CD8-positive, alpha-beta T cell (primary cell): ENCODE measurements at regions of chr19 and their contacts with region 1.

Region 1: GRCh38 chr19:48445606-48446481 is at the start of gene GRWD1:
- DNase-seq: peak; percentile 83 to 98 (median 91)
- ATAC-seq: peak; percentile 93
- H3K4me3 ChIP-seq: peak within 1 kb of the TSS; percentile 82 to 90
- H3K4me3 Mint-ChIP-seq: peak within 1 kb of the TSS; percentile 93
- H3K27ac ChIP-seq: peak within 1 kb of the TSS; percentile 79 to 89
- H3K27ac Mint-ChIP-seq: peak within 1 kb of the TSS; percentile 95
- H3K4me1 ChIP-seq: peaks cover 24% of the 10 kb centered on the region
- H3K4me1 Mint-ChIP-seq: peaks cover 40% of the 10 kb centered on the region
- H3K27me3 ChIP-seq: peaks cover 19 to 22% of the 10 kb centered on the region in 2 experiments
- H3K27me3 Mint-ChIP-seq: peaks cover 18% of the 10 kb centered on the region
- CTCF ChIP-seq: no peak
- total RNA-seq, gene GRWD1: 36.1 to 41.7 TPM

Region 2: GRCh38 chr19:48170038-48170812 is 275.6 kb before region 1 on chr19 and contains the starts of genes LIG1 and ZSWIM9:
- CTCF ChIA-PET with region 1: no interaction called
- POLR2A ChIA-PET with region 1: no interaction called
- intact Hi-C with region 1: loop called in 1 of 2 experiments (anchors 2 kb)
- DNase-seq: peak; percentile 82 to 95 (median 90)
- ATAC-seq: peak; percentile 81
- H3K4me3 ChIP-seq: peak within 1 kb of the TSS; percentile 96 to 100
- H3K4me3 Mint-ChIP-seq: peak within 1 kb of the TSS; percentile 98
- H3K27ac ChIP-seq: peak within 1 kb of the TSS; percentile 82 to 92
- H3K27ac Mint-ChIP-seq: peak within 1 kb of the TSS; percentile 97
- H3K4me1 ChIP-seq: peaks cover 7% of the 10 kb centered on the region
- H3K4me1 Mint-ChIP-seq: peaks cover 22% of the 10 kb centered on the region
- H3K27me3 ChIP-seq: no peaks in the 10 kb centered on the region
- H3K27me3 Mint-ChIP-seq: no peaks in the 10 kb centered on the region
- CTCF ChIP-seq: peak; percentile 25
- total RNA-seq, gene LIG1: 62.5 to 67.5 TPM
- total RNA-seq, gene ZSWIM9: 2.5 to 4.5 TPM

Region 3: GRCh38 chr19:48398375-48399235 is 47.2 kb before region 1 on chr19:
- CTCF ChIA-PET with region 1: no interaction called
- POLR2A ChIA-PET with region 1: no interaction called
- intact Hi-C with region 1: loop called (anchors 1 to 2 kb)
- DNase-seq: peak; percentile 73 to 94 (median 86)
- ATAC-seq: peak; percentile 77
- H3K4me3 ChIP-seq: peak overlapping the region; percentile 45 to 47
- H3K4me3 Mint-ChIP-seq: peak overlapping the region; percentile 63
- H3K27ac ChIP-seq: peak overlapping the region in 1 of 2 experiments; percentile 35
- H3K27ac Mint-ChIP-seq: no peak overlapping the region
- H3K4me1 ChIP-seq: peaks cover 42% of the 10 kb centered on the region
- H3K4me1 Mint-ChIP-seq: peaks cover 36% of the 10 kb centered on the region
- H3K27me3 ChIP-seq: peaks cover 20 to 32% of the 10 kb centered on the region in 2 experiments
- H3K27me3 Mint-ChIP-seq: peaks cover 22% of the 10 kb centered on the region
- CTCF ChIP-seq: no peak

Region 4: DNA sequence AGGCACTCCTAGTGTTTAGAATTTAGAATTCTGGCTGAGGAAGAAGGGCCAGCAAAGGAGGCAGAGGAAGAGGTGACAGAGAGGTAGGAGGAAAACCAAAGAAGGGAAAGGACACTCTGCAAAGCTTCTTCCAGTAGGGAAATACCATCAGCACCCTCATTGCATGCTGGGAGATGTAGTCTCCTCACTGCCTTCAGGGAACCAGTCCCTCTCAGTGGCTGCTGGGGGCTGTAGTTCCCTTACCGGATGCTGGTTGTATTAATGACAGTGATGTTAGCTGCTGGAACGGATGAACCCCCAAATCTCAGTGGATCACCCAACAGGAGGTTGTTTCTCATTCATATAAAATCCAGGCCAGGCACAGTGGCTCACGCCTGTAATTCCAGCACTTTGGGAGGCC is 42.2 kb before region 1 on chr19:
- CTCF ChIA-PET with region 1: no interaction called
- POLR2A ChIA-PET with region 1: no interaction called
- intact Hi-C with region 1: loop called (anchors 1 to 2 kb)
- DNase-seq: peak in 8 of 9 experiments; percentile 23 to 83 (median 56)
- ATAC-seq: peak; percentile 59
- H3K4me3 ChIP-seq: no peak overlapping the region
- H3K4me3 Mint-ChIP-seq: no peak overlapping the region
- H3K27ac ChIP-seq: peak overlapping the region in 1 of 2 experiments; percentile 40
- H3K27ac Mint-ChIP-seq: no peak overlapping the region
- H3K4me1 ChIP-seq: peaks cover 4% of the 10 kb centered on the region
- H3K4me1 Mint-ChIP-seq: peaks cover 12% of the 10 kb centered on the region
- H3K27me3 ChIP-seq: no peaks in the 10 kb centered on the region
- H3K27me3 Mint-ChIP-seq: peaks cover 8% of the 10 kb centered on the region
- CTCF ChIP-seq: no peak

Region 5: GRCh38 chr19:48419158-48419920 is 26.5 kb before region 1 on chr19:
- CTCF ChIA-PET with region 1: interaction called, 3 read pairs
- POLR2A ChIA-PET with region 1: no interaction called
- intact Hi-C with region 1: loop called in 1 of 2 experiments (anchors 1 kb)
- DNase-seq: peak; percentile 43 to 87 (median 72)
- ATAC-seq: peak; percentile 64
- H3K4me3 ChIP-seq: peak overlapping the region in 1 of 2 experiments; percentile 34
- H3K4me3 Mint-ChIP-seq: peak overlapping the region; percentile 77
- H3K27ac ChIP-seq: no peak overlapping the region
- H3K27ac Mint-ChIP-seq: no peak overlapping the region
- H3K4me1 ChIP-seq: peaks cover 16% of the 10 kb centered on the region
- H3K4me1 Mint-ChIP-seq: peaks cover 19% of the 10 kb centered on the region
- H3K27me3 ChIP-seq: peaks cover 0 to 2% of the 10 kb centered on the region in 2 experiments
- H3K27me3 Mint-ChIP-seq: peaks cover 25% of the 10 kb centered on the region
- CTCF ChIP-seq: no peak

Region 6: GRCh38 chr19:48468775-48469288 is 23.0 kb after region 1 on chr19:
- CTCF ChIA-PET with region 1: no interaction called
- POLR2A ChIA-PET with region 1: interaction called, 8 read pairs
- intact Hi-C with region 1: loop called (anchors 1 kb)
- DNase-seq: peak; percentile 98 to 100 (median 99)
- ATAC-seq: peak; percentile 85
- H3K4me3 ChIP-seq: peak overlapping the region; percentile 83 to 95
- H3K4me3 Mint-ChIP-seq: peak overlapping the region; percentile 90
- H3K27ac ChIP-seq: peak overlapping the region; percentile 75 to 90
- H3K27ac Mint-ChIP-seq: peak overlapping the region; percentile 85
- H3K4me1 ChIP-seq: peaks cover 15% of the 10 kb centered on the region
- H3K4me1 Mint-ChIP-seq: peaks cover 21% of the 10 kb centered on the region
- H3K27me3 ChIP-seq: no peaks in the 10 kb centered on the region
- H3K27me3 Mint-ChIP-seq: no peaks in the 10 kb centered on the region
- CTCF ChIP-seq: no peak

Region 7: DNA sequence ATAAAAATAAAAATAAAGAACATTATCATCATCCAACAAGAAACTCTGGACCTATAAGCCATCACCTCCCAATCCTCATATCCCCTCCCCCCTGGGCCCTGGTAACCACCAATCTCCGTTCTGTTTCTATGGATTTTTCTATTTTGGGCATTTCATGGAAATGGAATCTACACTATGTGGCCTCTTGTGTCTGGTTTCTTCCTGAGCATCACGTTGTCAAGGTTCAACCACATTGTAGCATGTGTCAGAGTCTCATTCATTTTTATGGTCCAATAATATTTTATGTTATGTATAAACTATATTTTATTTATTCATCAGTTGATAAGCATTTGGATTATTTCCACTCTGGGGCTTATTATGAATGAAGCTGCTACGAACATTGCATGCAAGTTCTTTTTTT is 133.0 kb after region 1 on chr19:
- CTCF ChIA-PET with region 1: no interaction called
- POLR2A ChIA-PET with region 1: no interaction called
- intact Hi-C with region 1: no loop called
- DNase-seq: no peak
- ATAC-seq: no peak
- H3K4me3 ChIP-seq: no peak overlapping the region
- H3K4me3 Mint-ChIP-seq: no peak overlapping the region
- H3K27ac ChIP-seq: no peak overlapping the region
- H3K27ac Mint-ChIP-seq: no peak overlapping the region
- H3K4me1 ChIP-seq: no peaks in the 10 kb centered on the region
- H3K4me1 Mint-ChIP-seq: peaks cover under 1% of the 10 kb centered on the region
- H3K27me3 ChIP-seq: no peaks in the 10 kb centered on the region
- H3K27me3 Mint-ChIP-seq: peaks cover 2% of the 10 kb centered on the region
- CTCF ChIP-seq: no peak